Posterior vena cava (tissue), 2 donors: ENCODE measurements at regions of chr2 and their contacts with region 1.

Region 1: DNA sequence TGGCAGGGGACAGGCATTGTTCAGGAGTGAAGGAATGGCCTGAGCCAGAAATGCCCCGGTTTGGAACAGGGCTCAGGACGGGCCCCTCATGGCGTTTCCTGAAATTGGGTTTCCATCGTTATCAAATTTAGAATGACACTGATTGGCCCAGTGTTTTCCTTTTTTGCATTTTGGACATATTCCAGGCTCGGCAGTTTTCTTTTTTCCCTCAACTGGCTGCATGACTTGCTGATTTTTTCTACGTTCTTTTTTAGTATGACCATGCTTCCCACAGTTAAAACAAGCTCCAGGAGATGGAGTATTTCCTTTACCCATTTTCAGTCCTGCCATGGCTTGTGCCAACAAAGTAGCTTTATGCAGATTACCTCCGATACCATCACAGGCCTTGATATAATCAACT is 20.4 kb upstream of the LYG2 start:
- DNase-seq: no peak

Region 2: GRCh38 chr2:99190548-99190947 is 85.3 kb before region 1 on chr2:
- intact Hi-C with region 1: loop called in 1 of 2 experiments (anchors 2 kb)
- DNase-seq: no peak

Region 3: GRCh38 chr2:99217929-99218501 is 57.9 kb before region 1 on chr2:
- intact Hi-C with region 1: no loop called
- DNase-seq: no peak

Region 4: DNA sequence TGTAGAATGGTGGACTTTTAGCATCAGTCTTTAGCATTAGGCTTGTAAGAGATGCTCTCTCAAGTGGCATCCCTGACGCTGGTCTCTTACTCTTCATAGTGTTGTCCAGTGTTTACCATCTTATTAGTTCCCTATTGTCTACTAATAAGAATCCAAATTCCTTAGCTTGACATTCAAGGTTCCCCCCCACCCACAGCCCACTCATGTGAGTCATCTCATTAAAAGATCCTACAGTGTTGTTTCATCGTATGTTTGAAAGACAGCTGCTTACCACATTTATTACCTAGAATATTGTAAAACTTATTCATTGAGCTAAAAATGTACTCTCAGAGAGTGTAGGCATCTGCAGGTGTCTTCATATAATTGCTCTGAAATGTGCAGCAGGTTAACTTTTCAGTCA is 89.8 kb after region 1 on chr2:
- intact Hi-C with region 1: no loop called
- DNase-seq: no peak